ENCODE measurements at regions of chr6 and their contacts with region 1.

Region 1: DNA sequence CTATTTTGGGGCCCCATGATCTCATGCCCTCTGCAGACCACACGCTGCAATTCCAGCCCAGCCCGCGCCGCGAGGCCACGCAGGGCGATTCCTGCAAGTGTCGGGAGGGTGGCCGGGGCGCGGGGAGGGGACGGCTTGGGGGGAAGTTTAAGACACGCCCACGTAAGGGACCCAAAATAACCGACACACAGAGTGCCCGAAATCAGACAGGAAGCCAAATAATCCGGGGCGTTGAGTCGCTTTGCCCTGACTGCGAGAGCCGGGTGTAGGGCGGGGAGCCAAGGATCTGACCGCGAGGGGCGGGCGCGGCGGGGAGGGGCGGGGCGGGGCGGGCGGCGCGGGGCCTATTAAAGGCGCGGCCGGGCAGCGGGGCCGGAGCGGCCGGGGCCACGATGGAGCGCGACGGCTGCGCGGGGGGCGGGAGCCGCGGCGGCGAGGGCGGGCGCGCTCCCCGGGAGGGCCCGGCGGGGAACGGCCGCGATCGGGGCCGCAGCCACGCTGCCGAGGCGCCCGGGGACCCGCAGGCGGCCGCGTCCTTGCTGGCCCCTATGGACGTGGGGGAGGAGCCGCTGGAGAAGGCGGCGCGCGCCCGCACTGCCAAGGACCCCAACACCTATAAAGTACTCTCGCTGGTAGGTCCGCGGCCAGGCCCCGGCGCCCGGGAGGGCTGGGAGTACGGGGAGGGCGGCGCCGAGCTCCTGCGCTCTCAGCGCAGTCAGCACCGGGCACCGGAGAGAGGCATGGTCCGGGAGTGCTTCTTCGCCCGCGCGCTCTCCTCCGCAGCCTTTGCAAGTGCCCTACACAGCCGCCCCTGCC is at the start of gene ENPP1:
- DNase-seq: peak; percentile 45
- H3K4me3 ChIP-seq: peak within 1 kb of the TSS; percentile 36 to 74 (median 60)
- H3K27ac ChIP-seq: no peak within 1 kb of the TSS
- H3K4me1 ChIP-seq: peaks cover 9% of the 10 kb centered on the region
- H3K27me3 ChIP-seq: peaks cover 5 to 10% of the 10 kb centered on the region in 2 experiments
- CTCF ChIP-seq: peak in 1 of 2 donors; percentile 10
- POLR2A ChIP-seq: no peak
- total RNA-seq, gene ENPP1: 1.4 and 1.5 TPM in 2 replicates

Region 2: GRCh38 chr6:131858765-131859415 is 51.0 kb after region 1 on chr6:
- CTCF ChIA-PET with region 1: no interaction called
- POLR2A ChIA-PET with region 1: no interaction called
- dilution Hi-C with region 1: no loop called
- intact Hi-C with region 1: loop called (anchors 1 kb)
- DNase-seq: peak; percentile 33
- H3K4me3 ChIP-seq: no peak overlapping the region
- H3K27ac ChIP-seq: no peak overlapping the region
- H3K4me1 ChIP-seq: peaks cover 8% of the 10 kb centered on the region
- H3K27me3 ChIP-seq: no peaks in the 10 kb centered on the region
- CTCF ChIP-seq: no peak
- POLR2A ChIP-seq: no peak

Measured in endothelial cell of umbilical vein (primary cell).